ENCODE measurements at regions of chr10 and their contacts with region 1.

Region 1: GRCh38 chr10:113854011-113854760 is at the starts of genes DCLRE1A and NHLRC2:
- DNase-seq: peak; percentile 62
- ATAC-seq: peak; percentile 68
- H3K4me3 Mint-ChIP-seq: peak within 1 kb of the TSS; percentile 98
- H3K27ac Mint-ChIP-seq: peak within 1 kb of the TSS; percentile 99
- H3K4me1 Mint-ChIP-seq: peaks cover 51% of the 10 kb centered on the region
- H3K27me3 Mint-ChIP-seq: no peaks in the 10 kb centered on the region
- CTCF ChIP-seq: no peak
- total RNA-seq, gene DCLRE1A: 4.5 and 4.9 TPM in 2 replicates
- total RNA-seq, gene NHLRC2: 40.3 and 43.9 TPM in 2 replicates

Region 2: DNA sequence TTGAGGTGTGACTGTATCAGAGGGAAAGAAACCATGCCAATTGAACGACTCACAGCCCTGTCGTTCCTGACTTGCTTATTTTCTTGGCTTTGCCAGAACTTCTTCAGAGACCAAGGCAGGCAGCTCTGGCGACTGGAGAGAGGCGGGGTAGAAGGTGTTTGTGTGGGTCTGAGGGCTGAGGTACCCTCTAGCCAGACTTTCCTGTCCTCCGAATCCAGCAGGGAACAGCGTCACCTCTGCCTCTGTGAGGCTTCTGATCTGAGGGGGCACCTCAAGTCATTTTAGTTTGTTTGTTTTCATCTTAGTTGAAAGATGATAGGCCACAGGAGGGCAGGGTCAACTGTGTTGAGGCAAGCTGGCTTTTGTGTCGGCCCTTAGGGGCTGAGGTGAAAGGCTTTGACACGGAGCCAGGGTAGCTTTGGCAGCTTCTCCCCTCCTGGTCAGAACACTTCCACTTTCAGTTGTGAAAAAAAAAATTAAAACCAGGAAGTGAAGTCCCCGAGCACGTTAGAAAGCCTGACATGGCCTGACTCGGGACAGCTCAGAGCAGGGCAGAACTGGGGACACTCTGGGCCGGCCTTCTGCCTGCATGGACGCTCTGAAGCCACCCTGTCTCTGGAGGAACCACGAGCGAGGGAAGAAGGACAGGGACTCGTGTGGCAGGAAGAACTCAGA is 1478.3 kb before region 1 on chr10:
- CTCF ChIA-PET with region 1: no interaction called
- POLR2A ChIA-PET with region 1: no interaction called
- intact Hi-C with region 1: loop called (anchors 10 kb)
- DNase-seq: peak; percentile 47
- ATAC-seq: peak; percentile 85
- H3K4me3 Mint-ChIP-seq: peak overlapping the region; percentile 100
- H3K27ac Mint-ChIP-seq: peak overlapping the region; percentile 99
- H3K4me1 Mint-ChIP-seq: peaks cover 61% of the 10 kb centered on the region
- H3K27me3 Mint-ChIP-seq: no peaks in the 10 kb centered on the region
- CTCF ChIP-seq: no peak

Region 3: GRCh38 chr10:113347508-113347907 is 506.7 kb before region 1 on chr10:
- CTCF ChIA-PET with region 1: no interaction called
- POLR2A ChIA-PET with region 1: no interaction called
- intact Hi-C with region 1: no loop called
- DNase-seq: no peak
- ATAC-seq: no peak
- H3K4me3 Mint-ChIP-seq: no peak overlapping the region
- H3K27ac Mint-ChIP-seq: no peak overlapping the region
- H3K4me1 Mint-ChIP-seq: no peaks in the 10 kb centered on the region
- H3K27me3 Mint-ChIP-seq: peaks cover 2% of the 10 kb centered on the region
- CTCF ChIP-seq: no peak

Region 4: DNA sequence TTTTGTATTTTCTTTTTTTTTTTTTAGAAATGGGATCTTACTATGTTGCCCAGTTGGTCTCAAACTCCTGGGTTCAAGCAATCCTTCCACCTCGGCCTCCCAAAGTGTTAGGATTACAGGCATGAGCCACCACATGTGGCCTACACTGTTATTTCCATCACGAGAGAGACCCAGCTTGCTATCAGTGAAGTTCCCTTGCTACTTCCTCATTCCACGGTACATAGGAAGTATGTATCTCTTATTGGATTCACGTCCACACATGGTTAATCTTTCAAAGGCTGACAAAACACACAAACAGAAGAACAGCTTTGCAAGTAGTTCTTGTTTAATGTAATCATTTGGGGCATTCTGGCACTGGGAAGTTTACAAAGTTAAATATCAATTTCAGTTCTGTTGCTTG is 51.2 kb before region 1 on chr10:
- CTCF ChIA-PET with region 1: interaction called, 3 read pairs
- POLR2A ChIA-PET with region 1: no interaction called
- intact Hi-C with region 1: loop called (anchors 2 kb)
- DNase-seq: no peak
- ATAC-seq: no peak
- H3K4me3 Mint-ChIP-seq: no peak overlapping the region
- H3K27ac Mint-ChIP-seq: no peak overlapping the region
- H3K4me1 Mint-ChIP-seq: peaks cover 7% of the 10 kb centered on the region
- H3K27me3 Mint-ChIP-seq: peaks cover 3% of the 10 kb centered on the region
- CTCF ChIP-seq: no peak

Region 5: DNA sequence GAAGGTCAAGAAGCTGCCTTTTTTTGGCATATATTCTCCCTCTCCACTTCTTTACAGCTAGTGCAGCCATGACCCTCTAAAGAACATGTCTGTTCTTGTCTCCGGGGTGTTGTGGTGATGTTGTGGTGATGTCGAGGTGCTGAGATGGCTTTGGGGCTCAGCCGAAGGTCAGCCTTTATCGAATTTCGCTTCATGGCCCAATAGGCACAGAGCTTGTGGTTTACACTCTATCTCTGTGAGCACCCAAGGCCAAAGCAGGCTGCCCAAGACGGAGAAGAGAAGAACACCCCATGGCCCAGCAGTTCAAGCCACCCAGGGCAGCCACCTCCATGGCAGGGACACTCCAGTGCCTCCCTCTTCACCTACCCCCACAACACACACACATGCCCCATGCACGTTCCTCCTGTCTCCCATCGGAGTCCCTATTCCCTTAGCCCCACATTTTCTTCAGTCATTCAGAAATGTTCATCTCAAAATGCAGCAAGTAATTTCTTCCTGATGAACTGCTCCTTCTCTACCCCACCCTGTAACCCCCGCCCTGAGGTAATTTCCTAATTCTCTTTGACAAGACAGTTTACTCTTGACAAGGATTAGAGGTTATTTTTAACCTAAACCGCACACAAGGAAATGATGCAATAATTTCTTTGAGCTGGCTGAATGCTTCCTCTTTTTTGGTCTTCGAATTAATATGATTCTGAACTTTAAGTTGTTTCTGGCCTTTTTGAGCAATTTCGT is 170.9 kb after region 1 on chr10:
- CTCF ChIA-PET with region 1: no interaction called
- POLR2A ChIA-PET with region 1: no interaction called
- intact Hi-C with region 1: loop called (anchors 1 kb)
- DNase-seq: peak; percentile 25
- ATAC-seq: peak; percentile 80
- H3K4me3 Mint-ChIP-seq: peak overlapping the region; percentile 71
- H3K27ac Mint-ChIP-seq: peak overlapping the region; percentile 82
- H3K4me1 Mint-ChIP-seq: peaks cover 33% of the 10 kb centered on the region
- H3K27me3 Mint-ChIP-seq: peaks cover 5% of the 10 kb centered on the region
- CTCF ChIP-seq: no peak

Region 6: GRCh38 chr10:114499630-114500190 is 645.5 kb after region 1 on chr10:
- CTCF ChIA-PET with region 1: no interaction called
- POLR2A ChIA-PET with region 1: no interaction called
- intact Hi-C with region 1: loop called (anchors 2 kb)
- DNase-seq: peak; percentile 37
- ATAC-seq: peak; percentile 49
- H3K4me3 Mint-ChIP-seq: peak overlapping the region; percentile 67
- H3K27ac Mint-ChIP-seq: peak overlapping the region; percentile 96
- H3K4me1 Mint-ChIP-seq: peaks cover 83% of the 10 kb centered on the region
- H3K27me3 Mint-ChIP-seq: no peaks in the 10 kb centered on the region
- CTCF ChIP-seq: no peak

Region 7: GRCh38 chr10:114801411-114801813 is 947.2 kb after region 1 on chr10:
- CTCF ChIA-PET with region 1: no interaction called
- POLR2A ChIA-PET with region 1: no interaction called
- intact Hi-C with region 1: no loop called
- DNase-seq: no peak
- ATAC-seq: no peak
- H3K4me3 Mint-ChIP-seq: no peak overlapping the region
- H3K27ac Mint-ChIP-seq: no peak overlapping the region
- H3K4me1 Mint-ChIP-seq: peaks cover 4% of the 10 kb centered on the region
- H3K27me3 Mint-ChIP-seq: peaks cover 2% of the 10 kb centered on the region
- CTCF ChIP-seq: no peak

Region 8: GRCh38 chr10:114821293-114821914 is 967.2 kb after region 1 on chr10 and contains the start of gene FHIP2A:
- CTCF ChIA-PET with region 1: no interaction called
- POLR2A ChIA-PET with region 1: no interaction called
- intact Hi-C with region 1: loop called (anchors 5 kb)
- DNase-seq: peak; percentile 95
- ATAC-seq: peak; percentile 93
- H3K4me3 Mint-ChIP-seq: peak within 1 kb of the TSS; percentile 91
- H3K27ac Mint-ChIP-seq: peak within 1 kb of the TSS; percentile 90
- H3K4me1 Mint-ChIP-seq: peaks cover 27% of the 10 kb centered on the region
- H3K27me3 Mint-ChIP-seq: no peaks in the 10 kb centered on the region
- CTCF ChIP-seq: no peak
- total RNA-seq, gene FHIP2A: 16.5 and 20.2 TPM in 2 replicates

Region 9: GRCh38 chr10:115092555-115093285 is 1238.5 kb after region 1 on chr10:
- CTCF ChIA-PET with region 1: no interaction called
- POLR2A ChIA-PET with region 1: no interaction called
- intact Hi-C with region 1: loop called (anchors 5 kb)
- DNase-seq: peak; percentile 60
- ATAC-seq: peak; percentile 84
- H3K4me3 Mint-ChIP-seq: peak overlapping the region; percentile 85
- H3K27ac Mint-ChIP-seq: no peak overlapping the region
- H3K4me1 Mint-ChIP-seq: peaks cover 13% of the 10 kb centered on the region
- H3K27me3 Mint-ChIP-seq: peaks cover 35% of the 10 kb centered on the region
- CTCF ChIP-seq: no peak

Measured in activated B cell treated with CpG ODN at 0.5 μM for 24 hours (primary cell).